ENCODE measurements at regions of chr18 and their contacts with region 1.

Region 1: GRCh38 chr18:58831606-58832005 is 33.1 kb upstream of the ZNF532 start:
- DNase-seq: no peak
- ATAC-seq: no peak
- H3K4me3 ChIP-seq: no peak overlapping the region
- H3K4me3 Mint-ChIP-seq: no peak overlapping the region
- H3K27ac ChIP-seq: no peak overlapping the region
- H3K27ac Mint-ChIP-seq: no peak overlapping the region
- H3K4me1 ChIP-seq: no peaks in the 10 kb centered on the region
- H3K4me1 Mint-ChIP-seq: no peaks in the 10 kb centered on the region
- H3K27me3 ChIP-seq: peaks cover 2 to 16% of the 10 kb centered on the region in 2 experiments
- H3K27me3 Mint-ChIP-seq: peaks cover 35 to 37% of the 10 kb centered on the region in 2 donors

Region 2: DNA sequence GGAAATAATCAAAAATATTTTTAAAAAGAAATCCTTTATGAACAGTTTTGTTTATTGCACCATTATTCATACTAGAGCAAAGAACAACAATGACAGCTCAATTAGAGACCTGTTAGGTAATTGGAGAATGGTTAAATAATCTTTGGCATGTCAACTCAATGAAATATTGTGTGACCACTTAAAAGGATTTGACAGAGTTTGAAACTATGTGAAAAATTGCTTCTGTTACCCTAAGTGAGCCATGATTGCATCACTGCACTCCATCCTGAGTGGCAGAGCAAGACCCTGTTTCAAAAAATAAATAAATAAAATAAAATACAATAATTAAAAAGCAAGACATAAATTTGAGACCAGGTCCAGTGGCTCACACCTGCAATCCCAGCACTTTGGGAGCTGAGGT is 962.4 kb before region 1 on chr18:
- CTCF ChIA-PET with region 1: no interaction called
- POLR2A ChIA-PET with region 1: no interaction called
- DNase-seq: no peak
- ATAC-seq: no peak
- H3K4me3 ChIP-seq: no peak overlapping the region
- H3K4me3 Mint-ChIP-seq: no peak overlapping the region
- H3K27ac ChIP-seq: no peak overlapping the region
- H3K27ac Mint-ChIP-seq: no peak overlapping the region
- H3K4me1 ChIP-seq: no peaks in the 10 kb centered on the region
- H3K4me1 Mint-ChIP-seq: no peaks in the 10 kb centered on the region
- H3K27me3 ChIP-seq: peaks cover 0 to 7% of the 10 kb centered on the region in 2 experiments
- H3K27me3 Mint-ChIP-seq: peaks cover 7 to 9% of the 10 kb centered on the region in 2 donors

Region 3: DNA sequence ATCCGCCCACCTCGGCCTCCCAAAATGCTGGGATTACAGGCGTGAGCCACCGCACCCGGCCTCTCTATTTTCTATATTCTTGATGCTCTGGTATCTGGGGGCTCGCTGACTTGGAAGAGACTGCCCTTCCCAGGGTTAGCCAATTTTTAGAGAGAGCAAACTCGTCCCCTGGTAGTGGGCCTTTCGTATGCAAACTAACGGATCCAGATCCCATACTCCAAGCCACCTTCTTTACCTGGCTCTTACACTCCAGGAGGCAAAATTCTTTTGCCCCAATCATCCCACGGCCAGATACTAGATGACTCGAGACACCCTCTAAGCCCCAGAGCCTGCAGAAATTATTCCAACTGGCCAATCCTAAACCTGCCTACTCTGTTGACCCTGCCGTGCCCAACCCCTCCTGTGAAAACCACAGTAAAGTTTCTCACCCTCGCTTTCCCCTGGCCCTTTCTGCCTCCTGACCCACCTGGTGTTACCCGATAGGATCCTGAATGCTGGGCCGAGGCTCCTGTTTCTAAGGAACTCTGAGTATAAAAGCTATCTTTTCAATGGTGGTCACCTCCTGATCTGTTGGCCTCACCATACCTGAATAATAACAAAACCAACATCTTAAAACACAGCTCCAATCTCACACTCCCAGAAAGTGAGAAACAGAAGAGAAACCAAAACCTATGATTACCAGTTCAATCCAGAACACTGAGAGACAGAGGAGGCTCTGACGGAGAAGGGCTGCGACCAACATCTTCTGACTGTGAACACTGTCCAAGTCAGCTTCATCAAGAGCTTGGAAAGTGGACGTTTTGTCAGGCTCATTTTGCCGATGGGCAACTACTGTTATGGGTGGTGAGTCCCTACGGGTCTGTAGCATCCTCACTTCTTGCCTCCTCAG is 24.5 kb before region 1 on chr18:
- CTCF ChIA-PET with region 1: no interaction called
- POLR2A ChIA-PET with region 1: no interaction called
- DNase-seq: no peak
- ATAC-seq: no peak
- H3K4me3 ChIP-seq: no peak overlapping the region
- H3K4me3 Mint-ChIP-seq: no peak overlapping the region
- H3K27ac ChIP-seq: no peak overlapping the region
- H3K27ac Mint-ChIP-seq: no peak overlapping the region
- H3K4me1 ChIP-seq: no peaks in the 10 kb centered on the region
- H3K4me1 Mint-ChIP-seq: no peaks in the 10 kb centered on the region
- H3K27me3 ChIP-seq: peaks cover 0 to 11% of the 10 kb centered on the region in 2 experiments
- H3K27me3 Mint-ChIP-seq: peaks cover 46% of the 10 kb centered on the region in 2 donors

Region 4: GRCh38 chr18:59802031-59802430 is 970.4 kb after region 1 on chr18:
- CTCF ChIA-PET with region 1: no interaction called
- POLR2A ChIA-PET with region 1: interaction called in 1 of 2 experiments, 10 read pairs
- DNase-seq: peak in 1 of 35 experiments; percentile 6
- ATAC-seq: no peak
- H3K4me3 ChIP-seq: no peak overlapping the region
- H3K4me3 Mint-ChIP-seq: no peak overlapping the region
- H3K27ac ChIP-seq: peak overlapping the region; percentile 10
- H3K27ac Mint-ChIP-seq: peak overlapping the region in 1 of 2 donors; percentile 18
- H3K4me1 ChIP-seq: peaks cover 0 to 4% of the 10 kb centered on the region in 2 experiments
- H3K4me1 Mint-ChIP-seq: peaks cover 0 to 5% (median 5%) of the 10 kb centered on the region in 3 donors
- H3K27me3 ChIP-seq: no peaks in the 10 kb centered on the region
- H3K27me3 Mint-ChIP-seq: no peaks in the 10 kb centered on the region